ENCODE measurements at regions of chr11 and their contacts with region 1.

Region 1: GRCh38 chr11:2526808-2527381 is 82.1 kb downstream of the KCNQ1 start:
- DNase-seq: peak; percentile 39 to 54
- ATAC-seq: peak in 6 of 8 donors; percentile 19 to 47 (median 30)
- H3K4me3 ChIP-seq: peak overlapping the region in 6 of 10 donors; percentile 2 to 34 (median 16)
- H3K27ac ChIP-seq: peak overlapping the region in 4 of 10 donors; percentile 39 to 64 (median 47)
- H3K4me1 ChIP-seq: peaks cover 7 to 30% (median 20%) of the 10 kb centered on the region in 9 donors
- H3K27me3 ChIP-seq: no peaks in the 10 kb centered on the region
- CTCF ChIP-seq: peak in 4 of 9 donors; percentile 19 to 32 (median 24)

Region 2: DNA sequence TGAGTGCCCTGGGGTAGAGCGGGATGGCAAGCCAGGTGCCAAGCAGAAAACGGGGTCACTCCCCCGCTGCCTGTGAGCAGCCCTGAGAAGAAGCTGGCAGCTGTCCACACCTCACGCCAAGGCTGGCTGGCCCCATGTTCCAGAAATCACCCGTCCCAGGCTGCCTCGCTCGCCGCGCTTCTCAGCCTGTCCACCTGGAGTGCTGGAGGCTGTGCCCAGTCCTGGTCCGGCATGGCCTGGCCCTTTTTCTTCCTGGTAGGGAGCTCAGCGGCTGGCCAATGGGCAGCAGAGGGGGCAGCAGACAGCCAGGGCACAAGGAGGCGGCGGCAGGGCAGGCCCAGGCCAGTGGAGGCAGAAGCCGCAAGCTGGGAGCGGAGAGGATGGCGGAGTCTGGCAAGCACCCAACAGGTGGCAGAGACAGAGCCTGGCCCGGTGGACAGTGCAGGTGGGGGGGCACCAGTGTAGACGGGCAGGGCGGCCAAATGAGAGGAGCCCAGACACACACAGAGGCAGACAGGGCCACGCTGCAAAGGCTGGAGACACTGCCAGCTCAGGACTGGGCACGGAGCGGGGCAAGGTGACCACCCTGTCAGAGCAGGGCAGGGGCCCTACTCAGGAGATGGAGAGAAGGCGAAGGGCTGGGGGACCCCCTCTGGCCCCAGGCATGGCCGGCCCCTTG is 318.1 kb before region 1 on chr11:
- intact Hi-C with region 1: loop called in 2 of 10 experiments (anchors 10 kb)
- DNase-seq: peak in 1 of 2 donors; percentile 2
- ATAC-seq: peak in 3 of 8 donors; percentile 18 to 33 (median 19)
- H3K4me3 ChIP-seq: no peak overlapping the region
- H3K27ac ChIP-seq: no peak overlapping the region
- H3K4me1 ChIP-seq: peaks cover 0 to 4% (median 0%) of the 10 kb centered on the region in 9 donors
- H3K27me3 ChIP-seq: peaks cover 0 to 15% (median 3%) of the 10 kb centered on the region in 7 donors
- CTCF ChIP-seq: no peak

Region 3: GRCh38 chr11:2444821-2445745 is 81.8 kb before region 1 on chr11 and contains the start of gene KCNQ1:
- intact Hi-C with region 1: loop called in 2 of 10 experiments (anchors 5 kb)
- DNase-seq: peak in 1 of 2 donors; percentile 68
- ATAC-seq: peak; percentile 38 to 83 (median 76)
- H3K4me3 ChIP-seq: peak within 1 kb of the TSS; percentile 32 to 60 (median 54)
- H3K27ac ChIP-seq: peak within 1 kb of the TSS in 8 of 10 donors; percentile 47 to 82 (median 58)
- H3K4me1 ChIP-seq: peaks cover 3 to 54% (median 40%) of the 10 kb centered on the region in 9 donors
- H3K27me3 ChIP-seq: peaks cover 0 to 15% (median 5%) of the 10 kb centered on the region in 7 donors
- CTCF ChIP-seq: peak in 1 of 9 donors; percentile 13
- total RNA-seq, gene KCNQ1: 28.9 to 48.2 (median 36.4) TPM

Region 4: DNA sequence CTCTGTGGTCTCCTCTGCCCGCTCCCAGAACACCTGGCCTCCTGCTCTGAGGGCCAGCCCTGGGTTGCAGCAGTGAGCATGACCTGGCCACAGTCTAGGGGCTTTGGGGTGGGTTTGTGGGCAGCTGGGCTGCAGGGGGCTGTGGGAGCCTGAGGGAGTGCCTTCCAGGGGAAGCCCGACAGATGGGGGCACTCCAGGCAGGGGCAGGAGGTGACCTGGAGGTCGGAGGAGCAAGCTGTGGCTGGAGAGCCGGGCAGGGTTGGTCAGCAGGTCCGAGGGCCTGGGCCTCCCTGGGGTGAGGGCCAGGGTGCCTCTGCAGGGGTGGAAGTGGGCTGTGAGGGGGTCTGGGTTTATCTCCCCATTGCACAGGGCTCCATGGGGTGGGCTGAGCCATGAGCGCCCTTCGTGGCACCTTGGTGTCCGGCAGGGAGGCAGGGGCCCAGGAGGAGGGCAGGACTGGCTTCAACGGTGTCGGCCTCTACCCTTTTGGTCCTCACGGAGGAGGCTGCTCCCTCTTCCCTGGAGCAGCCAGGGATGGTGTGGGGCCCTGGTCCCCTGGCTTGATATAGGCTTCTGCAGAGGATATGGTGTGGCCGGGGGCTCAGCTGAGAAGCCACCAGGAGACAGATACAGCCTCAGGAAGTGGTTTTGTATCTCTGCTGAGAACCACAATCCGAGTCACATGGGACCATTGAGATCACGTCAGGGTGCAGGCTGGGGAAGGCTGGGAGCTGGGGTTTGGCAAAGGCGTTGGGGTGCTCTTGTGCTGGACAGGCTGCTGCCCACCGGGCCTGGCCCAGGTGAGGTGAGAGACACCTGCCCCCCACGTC is 59.8 kb before region 1 on chr11:
- intact Hi-C with region 1: no loop called
- DNase-seq: no peak
- ATAC-seq: no peak
- H3K4me3 ChIP-seq: no peak overlapping the region
- H3K27ac ChIP-seq: peak overlapping the region in 1 of 10 donors; percentile 29
- H3K4me1 ChIP-seq: peaks cover 8 to 58% (median 27%) of the 10 kb centered on the region in 9 donors
- H3K27me3 ChIP-seq: no peaks in the 10 kb centered on the region
- CTCF ChIP-seq: no peak

Region 5: GRCh38 chr11:2674658-2675131 is 147.8 kb after region 1 on chr11:
- intact Hi-C with region 1: no loop called
- DNase-seq: no peak
- ATAC-seq: peak in 2 of 8 donors; percentile 7 to 14
- H3K4me3 ChIP-seq: no peak overlapping the region
- H3K27ac ChIP-seq: peak overlapping the region in 3 of 10 donors; percentile 2 to 25 (median 10)
- H3K4me1 ChIP-seq: peaks cover 0 to 43% (median 27%) of the 10 kb centered on the region in 9 donors
- H3K27me3 ChIP-seq: no peaks in the 10 kb centered on the region
- CTCF ChIP-seq: no peak

Measured in heart right ventricle (tissue), 16 donors.